Aorta (tissue), 5 donors: ENCODE measurements at regions of chr3 and their contacts with region 1.

Region 1: GRCh38 chr3:100761211-100761942 is 52.1 kb downstream of the TFG start:
- DNase-seq: no peak
- ATAC-seq: no peak
- H3K4me3 ChIP-seq: no peak overlapping the region
- H3K27ac ChIP-seq: no peak overlapping the region
- H3K4me1 ChIP-seq: peaks cover 3 to 8% of the 10 kb centered on the region in 2 donors
- H3K27me3 ChIP-seq: no peaks in the 10 kb centered on the region

Region 2: GRCh38 chr3:100525753-100526612 is 235.4 kb before region 1 on chr3:
- intact Hi-C with region 1: no loop called
- DNase-seq: peak in 1 of 2 donors; percentile 51
- ATAC-seq: peak; percentile 69
- H3K4me3 ChIP-seq: no peak overlapping the region
- H3K27ac ChIP-seq: no peak overlapping the region
- H3K4me1 ChIP-seq: no peaks in the 10 kb centered on the region
- H3K27me3 ChIP-seq: no peaks in the 10 kb centered on the region

Region 3: DNA sequence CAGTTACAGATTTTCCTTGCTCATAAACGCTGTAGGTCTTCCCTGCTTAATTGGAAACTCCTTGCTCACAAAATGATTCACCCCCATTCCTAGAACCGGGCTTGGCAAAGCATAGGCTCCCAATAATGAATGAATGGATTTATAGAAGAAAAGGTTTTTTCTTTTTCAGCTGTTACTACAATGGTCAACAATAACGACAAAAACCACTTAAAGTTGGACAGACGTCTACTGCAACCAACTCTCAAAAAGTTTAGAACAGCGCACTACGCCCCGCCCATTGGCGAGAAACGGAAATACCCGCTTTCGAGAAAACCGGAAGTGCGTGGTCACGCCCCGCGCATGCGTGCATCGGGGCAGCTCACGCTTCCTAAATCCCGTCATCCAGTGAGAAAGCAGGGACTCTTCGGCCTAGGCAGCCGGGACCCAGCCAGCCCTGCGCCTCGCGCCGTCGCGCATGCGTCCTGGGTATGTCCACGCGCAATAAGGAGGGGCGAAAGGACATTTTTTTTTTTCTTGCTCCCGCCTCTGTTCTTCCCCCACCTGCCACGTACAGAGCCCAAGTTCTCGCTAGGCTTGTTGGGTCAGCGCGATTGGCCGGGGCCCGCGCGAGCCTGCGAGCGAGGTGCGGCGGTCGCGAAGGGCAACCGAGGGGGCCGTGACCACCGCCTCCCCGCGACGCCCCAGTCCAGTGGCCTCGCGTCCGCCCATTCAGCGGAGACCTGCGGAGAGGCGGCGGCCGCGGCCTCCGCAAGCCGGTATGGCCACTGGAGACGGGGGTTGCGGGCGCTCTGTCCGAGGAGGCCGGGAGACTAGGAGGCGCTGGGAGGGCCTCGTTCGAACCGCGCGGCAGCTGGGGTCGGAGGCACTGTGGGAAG is 52.2 kb before region 1 on chr3 and contains the start of gene TFG:
- intact Hi-C with region 1: loop called in 1 of 2 experiments (anchors 1 kb)
- DNase-seq: peak; percentile 99 to 100
- ATAC-seq: peak; percentile 99
- H3K4me3 ChIP-seq: peak within 1 kb of the TSS; percentile 69 to 98
- H3K27ac ChIP-seq: peak within 1 kb of the TSS in 1 of 2 donors; percentile 93
- H3K4me1 ChIP-seq: peaks cover 0 to 3% of the 10 kb centered on the region in 2 donors
- H3K27me3 ChIP-seq: peaks cover 0 to 2% of the 10 kb centered on the region in 2 donors
- total RNA-seq, gene TFG: 71.8 to 71.9 TPM

Region 4: GRCh38 chr3:100815583-100815982 is 54.2 kb after region 1 on chr3:
- intact Hi-C with region 1: no loop called
- DNase-seq: no peak
- ATAC-seq: no peak
- H3K4me3 ChIP-seq: no peak overlapping the region
- H3K27ac ChIP-seq: no peak overlapping the region
- H3K4me1 ChIP-seq: no peaks in the 10 kb centered on the region
- H3K27me3 ChIP-seq: no peaks in the 10 kb centered on the region

Region 5: GRCh38 chr3:100869787-100870186 is 108.4 kb after region 1 on chr3:
- intact Hi-C with region 1: loop called in 1 of 2 experiments (anchors 10 kb)
- DNase-seq: no peak
- ATAC-seq: peak; percentile 70
- H3K4me3 ChIP-seq: no peak overlapping the region
- H3K27ac ChIP-seq: no peak overlapping the region
- H3K4me1 ChIP-seq: peaks cover 0 to 3% of the 10 kb centered on the region in 2 donors
- H3K27me3 ChIP-seq: no peaks in the 10 kb centered on the region

Region 6: DNA sequence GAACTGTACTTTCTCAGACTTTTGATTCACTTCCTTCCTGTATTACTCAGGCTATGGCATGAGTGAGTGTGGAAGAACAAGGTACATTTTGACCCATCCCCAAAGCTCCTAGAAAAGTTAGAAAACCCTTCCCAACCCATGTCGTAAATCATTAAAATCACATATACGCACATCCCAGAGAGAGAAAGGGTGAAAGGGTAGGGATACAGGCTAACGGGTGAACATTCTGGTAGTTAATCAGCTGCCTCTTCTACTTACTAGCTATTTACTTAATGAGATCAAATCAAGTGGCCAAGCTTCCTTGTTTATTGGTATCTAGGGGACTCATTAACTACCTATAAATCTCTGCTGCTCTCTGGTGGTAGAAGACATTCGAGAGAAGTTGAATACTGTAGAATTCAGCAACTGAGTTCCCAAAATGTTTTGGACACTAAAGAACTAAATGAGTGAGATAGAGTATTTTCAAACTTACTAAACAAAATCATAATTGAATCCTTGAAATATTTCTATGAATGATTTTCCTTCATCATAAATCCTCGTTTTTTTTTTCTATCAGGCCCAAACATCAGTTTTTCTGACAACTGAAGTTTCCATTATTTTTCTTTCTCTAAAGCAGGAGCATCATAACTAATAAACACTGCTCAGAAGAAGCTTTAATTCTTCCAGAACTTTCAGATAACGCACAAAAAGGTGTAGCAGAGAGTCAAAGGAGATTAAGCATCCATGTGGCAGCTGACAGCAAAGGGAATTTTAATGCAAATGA is 434.8 kb after region 1 on chr3:
- intact Hi-C with region 1: loop called in 1 of 2 experiments (anchors 10 kb)
- DNase-seq: no peak
- ATAC-seq: peak; percentile 84
- H3K4me3 ChIP-seq: no peak overlapping the region
- H3K27ac ChIP-seq: no peak overlapping the region
- H3K4me1 ChIP-seq: no peaks in the 10 kb centered on the region
- H3K27me3 ChIP-seq: no peaks in the 10 kb centered on the region